ENCODE measurements at regions of chr20 and their contacts with region 1.

Region 1: DNA sequence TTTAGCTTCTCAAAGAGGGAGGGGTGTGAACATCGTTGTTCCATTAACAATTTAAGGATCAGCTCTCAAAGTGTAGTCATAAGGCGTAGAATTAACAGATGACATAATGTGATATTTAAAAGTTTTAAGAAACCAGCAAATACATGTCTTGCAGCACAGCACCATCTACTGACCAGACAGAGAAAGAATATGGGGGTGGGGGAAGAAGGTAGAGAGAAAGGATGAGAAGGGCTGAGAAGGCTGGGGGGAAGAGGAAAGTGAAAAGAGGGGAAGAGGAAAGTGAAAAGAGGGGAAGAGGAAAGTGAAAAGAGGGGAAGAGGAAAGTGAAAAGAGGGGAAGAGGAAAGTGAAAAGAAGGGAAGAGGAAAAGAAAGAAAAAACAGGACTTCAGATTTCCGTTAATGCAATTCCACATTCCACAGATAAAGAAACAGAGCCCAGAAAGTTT is 80.9 kb downstream of the HAO1 start:
- DNase-seq: peak; percentile 65
- H3K4me3 ChIP-seq: no peak overlapping the region
- H3K27ac ChIP-seq: peak overlapping the region; percentile 36
- H3K4me1 ChIP-seq: peaks cover 44% of the 10 kb centered on the region
- H3K27me3 ChIP-seq: no peaks in the 10 kb centered on the region
- CTCF ChIP-seq: peak; percentile 55 to 77

Region 2: DNA sequence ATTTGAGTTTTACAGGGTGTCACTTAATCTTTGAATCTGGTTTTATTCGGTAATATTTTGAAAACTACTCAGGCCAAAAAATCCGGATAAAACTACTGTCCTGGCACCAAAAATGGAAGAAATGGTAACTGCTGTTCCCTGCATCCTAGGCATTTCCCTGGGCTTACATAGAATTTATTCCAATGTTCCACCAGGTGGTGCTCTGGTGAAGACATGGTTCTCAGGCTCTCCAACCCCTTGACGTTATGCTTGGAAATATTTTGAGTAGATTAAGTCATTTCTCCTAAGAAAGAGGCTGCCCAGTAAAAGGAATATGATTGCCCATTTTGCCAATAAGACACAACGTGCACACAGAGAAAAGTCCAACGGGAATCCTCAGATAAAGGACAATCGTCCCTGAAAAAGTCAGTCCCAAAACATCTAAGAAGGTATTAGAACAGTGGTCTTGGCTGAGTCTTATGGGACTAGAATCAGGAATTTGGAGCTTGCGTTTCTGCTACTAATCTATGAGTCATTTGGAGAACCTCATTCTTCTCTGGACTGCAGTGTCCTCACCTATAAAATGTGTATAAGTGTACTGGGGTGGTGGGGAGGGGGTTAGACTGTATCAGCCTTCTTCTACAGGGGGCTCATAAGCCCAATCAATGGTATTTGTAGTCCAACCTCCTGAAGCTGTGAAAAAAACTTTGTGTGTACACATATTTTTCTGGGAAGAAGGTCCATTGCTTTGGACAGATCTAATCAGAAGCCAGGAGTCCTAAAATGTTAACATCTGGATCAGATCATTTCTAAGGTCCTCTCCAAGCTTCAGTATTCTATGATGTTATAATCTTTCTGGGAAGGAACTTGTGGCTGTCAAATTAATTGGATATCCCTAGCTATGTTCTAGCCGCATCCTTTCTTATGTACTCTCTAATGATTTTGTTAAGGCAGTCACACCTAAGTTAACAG is 1222.9 kb before region 1 on chr20:
- CTCF ChIA-PET with region 1: no interaction called
- dilution Hi-C with region 1: no loop called
- in situ Hi-C with region 1: no loop called
- intact Hi-C with region 1: loop called (anchors 5 kb)
- DNase-seq: peak; percentile 64
- H3K4me3 ChIP-seq: no peak overlapping the region
- H3K27ac ChIP-seq: no peak overlapping the region
- H3K4me1 ChIP-seq: peaks cover 16% of the 10 kb centered on the region
- H3K27me3 ChIP-seq: no peaks in the 10 kb centered on the region
- CTCF ChIP-seq: peak; percentile 65 to 74

Region 3: GRCh38 chr20:7113577-7114466 is 745.6 kb before region 1 on chr20:
- CTCF ChIA-PET with region 1: no interaction called
- dilution Hi-C with region 1: no loop called
- in situ Hi-C with region 1: no loop called
- intact Hi-C with region 1: loop called (anchors 5 kb)
- DNase-seq: peak; percentile 43
- H3K4me3 ChIP-seq: no peak overlapping the region
- H3K27ac ChIP-seq: no peak overlapping the region
- H3K4me1 ChIP-seq: no peaks in the 10 kb centered on the region
- H3K27me3 ChIP-seq: no peaks in the 10 kb centered on the region
- CTCF ChIP-seq: peak; percentile 52 to 76

Region 4: DNA sequence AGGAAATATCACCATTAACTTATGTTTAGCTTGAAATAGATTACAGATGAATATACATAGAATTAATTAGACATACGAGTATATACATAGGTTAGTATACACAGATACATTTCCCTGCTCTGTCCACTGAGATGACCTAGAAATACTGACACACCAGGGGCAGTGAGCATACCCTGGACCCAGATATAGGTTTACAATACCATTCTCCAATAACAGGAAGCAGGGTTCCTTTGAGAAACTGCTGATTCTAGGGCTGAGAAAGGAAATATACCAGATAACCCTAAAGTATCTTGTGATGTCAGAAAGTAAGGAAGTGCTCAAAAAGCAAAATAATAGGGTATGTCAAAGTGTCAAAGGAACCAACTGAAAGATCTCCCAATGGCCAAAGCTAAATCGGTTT is 241.6 kb before region 1 on chr20:
- CTCF ChIA-PET with region 1: no interaction called
- dilution Hi-C with region 1: no loop called
- in situ Hi-C with region 1: no loop called
- intact Hi-C with region 1: no loop called
- DNase-seq: no peak
- H3K4me3 ChIP-seq: no peak overlapping the region
- H3K27ac ChIP-seq: no peak overlapping the region
- H3K4me1 ChIP-seq: no peaks in the 10 kb centered on the region
- H3K27me3 ChIP-seq: no peaks in the 10 kb centered on the region
- CTCF ChIP-seq: no peak

Region 5: DNA sequence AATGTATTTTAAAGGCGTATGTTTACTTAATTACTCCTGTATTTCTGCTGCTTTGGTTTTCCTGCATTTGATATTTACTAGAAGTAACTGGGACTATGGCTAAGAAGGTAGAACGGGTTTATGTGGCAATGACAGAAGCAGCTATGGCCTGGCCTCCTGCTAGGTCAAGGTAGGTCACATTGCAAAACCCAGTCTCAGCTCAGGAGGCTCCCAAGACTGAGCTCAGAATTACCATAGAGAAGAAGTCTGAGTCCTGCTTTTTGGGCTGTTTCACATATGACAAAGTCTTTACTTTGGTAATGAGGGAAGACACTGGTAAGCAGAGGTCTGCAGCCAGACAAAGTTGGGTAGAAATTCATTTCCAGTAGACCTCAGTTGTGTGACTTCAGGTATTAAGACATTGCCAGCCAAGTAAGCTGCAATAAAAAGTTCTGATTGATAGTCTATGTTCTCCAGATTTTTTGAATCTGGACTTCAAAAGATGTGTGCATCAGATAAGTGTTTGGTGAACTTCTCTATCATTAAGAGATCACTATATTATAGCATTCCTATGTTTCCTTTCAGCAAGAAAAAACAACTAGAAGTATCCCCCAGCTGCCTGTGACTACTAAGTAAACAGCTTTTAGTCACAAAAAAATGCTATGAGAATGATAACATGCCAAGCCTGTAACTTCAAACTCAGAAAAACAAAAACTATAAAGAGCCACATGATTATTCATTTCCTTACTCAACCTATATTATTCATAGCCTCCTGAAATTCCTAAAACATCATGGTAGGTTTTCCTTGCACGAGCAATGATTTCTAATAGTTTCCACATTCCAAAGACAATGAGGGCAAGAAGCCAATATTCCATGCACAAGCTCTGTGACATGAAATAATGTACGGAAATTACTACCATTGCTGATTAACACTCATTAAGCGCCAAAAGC is 231.4 kb before region 1 on chr20:
- CTCF ChIA-PET with region 1: no interaction called
- dilution Hi-C with region 1: no loop called
- in situ Hi-C with region 1: no loop called
- intact Hi-C with region 1: loop called (anchors 2 kb)
- DNase-seq: peak; percentile 68
- H3K4me3 ChIP-seq: no peak overlapping the region
- H3K27ac ChIP-seq: peak overlapping the region; percentile 86
- H3K4me1 ChIP-seq: peaks cover 35% of the 10 kb centered on the region
- H3K27me3 ChIP-seq: no peaks in the 10 kb centered on the region
- CTCF ChIP-seq: no peak

Region 6: DNA sequence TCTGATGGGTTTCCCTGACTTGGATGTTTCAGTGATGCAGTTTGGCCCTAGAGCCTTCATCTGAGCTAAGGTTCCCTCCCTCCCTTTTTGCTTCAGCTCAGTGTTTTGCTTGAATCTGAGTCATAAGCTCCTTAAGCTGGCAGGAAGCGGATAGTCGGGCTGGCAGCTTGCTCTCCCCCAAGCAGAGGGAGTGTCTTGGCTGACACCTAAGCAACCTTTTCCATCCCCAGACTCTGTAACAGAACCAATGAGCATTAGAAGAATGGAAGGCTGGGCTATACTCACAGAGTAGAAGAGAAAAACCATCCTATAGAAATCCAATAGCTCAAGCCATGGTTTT is 17.4 kb before region 1 on chr20:
- CTCF ChIA-PET with region 1: interaction called, 16 read pairs
- dilution Hi-C with region 1: no loop called
- in situ Hi-C with region 1: no loop called
- intact Hi-C with region 1: no loop called
- DNase-seq: peak; percentile 91
- H3K4me3 ChIP-seq: no peak overlapping the region
- H3K27ac ChIP-seq: peak overlapping the region; percentile 92
- H3K4me1 ChIP-seq: peaks cover 37% of the 10 kb centered on the region
- H3K27me3 ChIP-seq: no peaks in the 10 kb centered on the region
- CTCF ChIP-seq: no peak

Measured in mammary epithelial cell (primary cell).